ENCODE measurements at regions of chr21 and their contacts with region 1.

Region 1: DNA sequence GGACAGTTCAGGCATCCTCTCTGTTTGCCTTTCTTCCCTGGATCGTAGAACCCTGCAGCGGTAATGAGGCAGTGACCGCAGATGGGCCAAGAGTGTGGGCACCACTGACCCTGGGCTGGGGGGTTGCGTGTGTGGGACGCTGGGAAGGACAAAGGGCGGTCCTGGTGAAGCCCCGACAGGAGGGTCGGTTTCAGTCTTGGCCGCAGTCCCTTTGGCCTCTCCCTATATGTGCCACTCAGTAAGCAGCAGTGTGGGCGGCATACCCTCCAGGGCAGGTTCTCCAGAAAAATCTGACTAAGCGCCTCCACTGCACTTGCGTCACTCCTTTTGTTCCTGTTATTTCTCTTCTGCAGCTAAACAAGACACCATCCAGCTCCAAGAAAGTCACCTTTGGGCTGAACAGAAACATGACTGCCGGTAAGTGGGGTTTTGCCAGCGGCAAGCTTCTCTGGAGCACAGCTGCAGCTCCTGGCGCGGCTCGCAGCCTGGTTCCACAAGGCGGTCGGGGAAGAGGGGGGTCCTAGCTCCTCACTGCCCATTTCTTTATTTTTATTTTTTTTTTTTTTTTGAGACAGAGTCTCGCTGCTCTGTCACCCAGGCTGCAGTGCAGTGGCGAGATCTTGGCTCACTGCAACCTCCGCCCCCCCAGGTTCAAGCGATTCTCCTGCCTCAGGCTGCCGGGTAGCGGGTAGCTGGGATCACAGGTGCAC is 27.7 kb upstream of the PDXK start:
- DNase-seq: peak; percentile 73
- H3K4me3 Mint-ChIP-seq: no peak overlapping the region
- H3K27ac Mint-ChIP-seq: no peak overlapping the region
- H3K4me1 Mint-ChIP-seq: no peaks in the 10 kb centered on the region
- H3K27me3 Mint-ChIP-seq: no peaks in the 10 kb centered on the region
- CTCF ChIP-seq: no peak

Region 2: GRCh38 chr21:43712308-43712974 is 21.2 kb after region 1 on chr21:
- CTCF ChIA-PET with region 1: interaction called, 3 read pairs
- POLR2A ChIA-PET with region 1: interaction called, 18 read pairs
- intact Hi-C with region 1: no loop called
- DNase-seq: peak; percentile 79
- H3K4me3 Mint-ChIP-seq: peak overlapping the region; percentile 46
- H3K27ac Mint-ChIP-seq: peak overlapping the region; percentile 96
- H3K4me1 Mint-ChIP-seq: peaks cover 28% of the 10 kb centered on the region
- H3K27me3 Mint-ChIP-seq: no peaks in the 10 kb centered on the region
- CTCF ChIP-seq: no peak